ENCODE measurements at regions of chr12 and their contacts with region 1.

Region 1: GRCh38 chr12:93677195-93678064 is at the start of gene CRADD:
- DNase-seq: peak; percentile 39 to 91 (median 76)
- H3K4me3 ChIP-seq: peak within 1 kb of the TSS; percentile 58 to 96 (median 80)
- H3K27ac ChIP-seq: peak within 1 kb of the TSS; percentile 78 to 100 (median 96)
- H3K27me3 ChIP-seq: peaks cover 0 to 5% (median 0%) of the 10 kb centered on the region in 45 donors
- CTCF ChIP-seq: peak in 33 of 56 donors; percentile 8 to 61 (median 27)
- total RNA-seq, gene CRADD: 12.3 to 35.5 (median 22.5) TPM

Region 2: DNA sequence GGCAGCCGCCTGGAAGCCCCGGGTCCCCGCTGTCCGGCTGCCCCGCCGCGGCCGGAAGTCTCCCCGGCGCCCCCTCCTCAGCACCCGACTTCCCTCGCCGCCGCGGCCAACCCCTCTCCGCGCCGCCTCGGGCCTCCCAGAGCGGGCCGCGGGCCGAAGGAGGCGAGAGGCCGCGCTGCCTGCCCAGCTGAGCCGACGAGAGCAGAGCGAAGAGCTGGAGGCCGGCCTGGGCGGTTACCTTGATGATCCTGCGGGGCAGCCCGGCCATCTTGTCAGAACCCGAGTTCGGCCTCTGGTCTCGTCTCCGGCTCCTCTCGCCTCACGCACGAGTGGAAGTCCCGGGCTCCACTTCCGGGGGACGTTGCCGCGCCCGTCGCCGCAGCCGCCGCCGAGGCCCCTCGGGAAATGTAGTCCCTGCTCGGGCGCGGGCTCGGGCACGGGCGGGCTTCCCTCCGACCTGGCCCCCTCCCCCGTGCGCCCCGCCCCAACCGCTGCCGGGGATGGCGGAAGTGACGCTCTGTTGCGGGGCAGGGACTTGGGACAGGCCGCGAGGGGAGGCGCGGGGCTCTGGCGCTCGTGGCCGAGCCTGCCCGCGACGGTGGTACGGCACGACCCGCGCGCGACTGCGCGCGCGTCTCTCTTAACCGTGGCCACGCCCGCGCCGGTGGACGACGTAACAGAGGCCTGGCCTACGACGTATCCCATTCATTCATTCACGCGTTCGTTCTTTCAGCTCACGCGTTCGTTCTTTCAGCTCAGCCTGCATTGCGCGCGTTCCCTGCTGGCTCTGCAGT is 235.6 kb before region 1 on chr12 and contains the start of gene UBE2N:
- intact Hi-C with region 1: loop called in 1 of 2 experiments (anchors 2 kb)
- DNase-seq: peak; percentile 93 to 99 (median 96)
- H3K4me3 ChIP-seq: peak within 1 kb of the TSS; percentile 68 to 100 (median 94)
- H3K27ac ChIP-seq: peak within 1 kb of the TSS; percentile 64 to 97 (median 89)
- H3K27me3 ChIP-seq: no peaks in the 10 kb centered on the region
- CTCF ChIP-seq: peak in 29 of 56 donors; percentile 5 to 58 (median 22)
- total RNA-seq, gene UBE2N: 71.0 to 192 (median 134) TPM

Region 3: DNA sequence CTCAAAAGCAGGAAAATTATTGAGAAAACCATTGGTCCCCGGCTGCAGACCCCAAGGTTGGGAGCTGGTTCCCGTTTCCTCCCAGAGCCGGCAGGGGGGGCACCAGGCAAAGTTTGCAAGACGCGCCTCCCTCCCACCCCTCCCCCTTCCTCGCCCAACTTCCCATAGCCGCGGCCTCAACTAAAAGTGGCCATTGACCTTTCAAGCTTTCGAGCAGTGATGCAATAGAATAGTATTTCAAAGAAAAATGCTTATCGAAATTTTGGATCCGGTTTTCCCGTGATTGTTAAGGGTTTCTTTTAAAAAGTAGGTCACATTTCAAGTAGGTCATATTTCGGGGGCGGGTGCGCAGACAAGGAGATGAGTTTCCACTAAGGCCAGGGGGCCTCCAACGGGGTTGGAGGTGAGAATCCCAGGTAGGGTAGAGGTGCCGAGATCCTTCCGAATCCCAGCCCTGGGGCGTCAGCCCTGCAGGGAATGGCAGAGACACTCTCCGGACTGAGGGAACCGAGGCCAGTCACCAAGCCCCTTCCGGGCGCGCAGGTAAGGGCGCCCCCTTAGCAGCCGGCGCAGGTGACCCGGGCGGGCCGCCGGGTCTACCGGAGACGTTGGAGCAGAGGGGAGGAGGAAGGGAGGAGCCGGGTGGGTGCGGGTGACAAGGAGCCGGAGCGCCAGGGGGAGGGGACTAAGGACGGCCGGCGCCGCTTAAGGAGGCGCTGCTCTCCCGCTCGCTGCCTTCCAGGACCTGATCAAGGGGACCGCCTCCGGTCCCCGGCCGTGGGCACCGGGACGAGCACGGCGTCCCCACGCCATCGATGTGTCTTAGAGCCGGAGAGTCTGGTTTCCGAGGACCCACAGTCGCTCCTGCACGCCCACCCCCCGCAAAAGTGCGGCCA is 107.5 kb before region 1 on chr12:
- intact Hi-C with region 1: loop called (anchors 1 to 2 kb)
- DNase-seq: peak; percentile 37 to 81 (median 70)
- H3K4me3 ChIP-seq: peak overlapping the region; percentile 56 to 93 (median 77)
- H3K27ac ChIP-seq: peak overlapping the region in 58 of 59 donors; percentile 15 to 90 (median 80)
- H3K27me3 ChIP-seq: peaks cover 0 to 31% (median 7%) of the 10 kb centered on the region in 45 donors
- CTCF ChIP-seq: peak; percentile 64 to 95 (median 82)

Region 4: DNA sequence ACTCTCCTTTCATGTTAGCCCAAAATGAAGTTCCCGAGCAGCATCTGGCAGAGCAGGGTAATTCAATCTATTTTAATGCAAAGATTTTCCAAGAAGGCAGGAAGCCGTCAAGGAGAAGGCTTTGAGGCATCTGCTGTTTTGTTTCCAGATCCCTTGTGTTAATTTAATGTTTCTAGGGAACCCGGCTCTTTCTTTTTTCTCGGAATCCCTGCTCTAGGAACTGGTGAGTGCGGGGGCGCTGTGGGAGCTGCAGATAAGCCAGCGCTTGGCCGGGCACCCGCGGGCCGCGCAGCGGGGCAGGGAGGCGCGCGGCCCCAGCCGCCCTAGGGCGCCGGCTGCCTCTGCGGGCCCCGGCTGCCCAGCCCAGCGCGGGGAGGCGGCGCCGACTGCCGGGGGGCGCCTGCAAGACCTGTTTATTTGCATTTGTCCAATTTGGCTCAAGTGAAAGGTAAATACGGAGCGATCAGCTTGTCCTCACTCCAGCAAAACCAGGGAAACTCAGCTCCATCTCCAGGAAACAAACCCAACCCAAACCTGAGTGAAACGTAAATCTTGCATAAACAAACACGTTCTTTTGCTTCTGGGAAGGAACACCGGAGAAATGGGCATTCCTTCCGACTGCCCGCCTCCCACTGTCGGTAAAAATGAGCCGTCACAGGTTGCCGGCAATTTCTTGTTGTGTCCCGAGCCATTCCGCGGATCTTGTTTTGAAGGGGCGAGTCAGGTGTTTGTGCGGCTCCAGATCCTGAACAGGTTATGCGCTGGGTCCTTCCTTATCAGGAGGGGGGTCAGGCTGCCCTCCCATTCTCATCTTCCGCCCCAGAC is 64.9 kb after region 1 on chr12:
- intact Hi-C with region 1: loop called (anchors 2 to 10 kb)
- DNase-seq: peak; percentile 63 to 81 (median 73)
- H3K4me3 ChIP-seq: peak overlapping the region; percentile 43 to 80 (median 64)
- H3K27ac ChIP-seq: peak overlapping the region in 55 of 59 donors; percentile 4 to 86 (median 70)
- H3K27me3 ChIP-seq: no peaks in the 10 kb centered on the region
- CTCF ChIP-seq: peak in 52 of 56 donors; percentile 5 to 69 (median 40)

Region 5: GRCh38 chr12:94101738-94102660 is 424.6 kb after region 1 on chr12:
- intact Hi-C with region 1: loop called in 1 of 2 experiments (anchors 5 kb)
- DNase-seq: peak; percentile 69 to 93 (median 86)
- H3K4me3 ChIP-seq: peak overlapping the region; percentile 39 to 86 (median 66)
- H3K27ac ChIP-seq: peak overlapping the region in 19 of 59 donors; percentile 3 to 81 (median 48)
- H3K27me3 ChIP-seq: peaks cover 0 to 14% (median 0%) of the 10 kb centered on the region in 45 donors
- CTCF ChIP-seq: peak; percentile 57 to 94 (median 88)

Region 6: DNA sequence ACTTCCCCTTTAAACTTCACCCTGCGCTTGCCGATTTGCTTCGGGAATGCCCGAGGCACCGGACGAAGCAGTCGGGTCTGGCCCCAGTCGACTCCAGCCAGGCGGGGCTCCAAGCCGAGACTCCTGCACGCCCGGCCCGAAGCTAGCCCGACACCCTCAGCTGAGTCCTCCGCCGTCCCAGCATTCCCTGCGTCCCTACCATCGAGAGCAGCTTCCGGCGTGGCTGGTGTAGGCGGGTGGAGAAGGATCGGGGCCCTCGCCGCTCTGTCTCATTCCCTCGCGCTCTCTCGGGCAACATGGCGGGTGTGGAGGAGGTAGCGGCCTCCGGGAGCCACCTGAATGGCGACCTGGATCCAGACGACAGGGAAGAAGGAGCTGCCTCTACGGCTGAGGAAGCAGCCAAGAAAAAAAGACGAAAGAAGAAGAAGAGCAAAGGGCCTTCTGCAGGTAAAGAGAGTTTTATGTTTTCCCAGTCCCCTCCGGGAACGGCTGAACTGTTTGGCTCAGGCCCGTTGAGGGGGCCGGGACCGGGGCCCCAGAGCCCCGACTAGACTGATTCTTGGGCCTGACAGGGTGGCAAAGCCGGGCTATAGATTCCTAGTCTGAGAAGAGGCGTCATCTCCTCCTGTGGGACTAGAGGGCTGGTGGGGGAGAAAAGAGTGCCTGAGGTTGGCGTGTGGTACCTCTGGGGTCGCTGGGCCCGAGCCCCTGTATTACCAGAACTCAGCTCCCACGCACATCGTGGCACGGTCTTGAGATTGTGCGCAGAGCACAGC is 1796.6 kb after region 1 on chr12 and contains the start of gene METAP2:
- intact Hi-C with region 1: loop called in 1 of 2 experiments (anchors 10 kb)
- DNase-seq: peak; percentile 92 to 98 (median 96)
- H3K4me3 ChIP-seq: peak within 1 kb of the TSS; percentile 65 to 100 (median 96)
- H3K27ac ChIP-seq: peak within 1 kb of the TSS; percentile 59 to 97 (median 91)
- H3K27me3 ChIP-seq: no peaks in the 10 kb centered on the region
- CTCF ChIP-seq: peak in 36 of 56 donors; percentile 4 to 55 (median 25)
- total RNA-seq, gene METAP2: 38.9 to 82.5 (median 54.8) TPM